ENCODE measurements at regions of chr5 and their contacts with region 1.

Region 1: GRCh38 chr5:178859625-178860531 is at the start of gene ZNF354B:
- DNase-seq: peak; percentile 95
- H3K4me3 Mint-ChIP-seq: peak within 1 kb of the TSS; percentile 89
- H3K27ac Mint-ChIP-seq: peak within 1 kb of the TSS; percentile 83
- H3K4me1 Mint-ChIP-seq: peaks cover 16% of the 10 kb centered on the region
- H3K27me3 Mint-ChIP-seq: no peaks in the 10 kb centered on the region
- total RNA-seq, gene ZNF354B: 13.5 and 17.0 TPM in 2 replicates

Region 2: DNA sequence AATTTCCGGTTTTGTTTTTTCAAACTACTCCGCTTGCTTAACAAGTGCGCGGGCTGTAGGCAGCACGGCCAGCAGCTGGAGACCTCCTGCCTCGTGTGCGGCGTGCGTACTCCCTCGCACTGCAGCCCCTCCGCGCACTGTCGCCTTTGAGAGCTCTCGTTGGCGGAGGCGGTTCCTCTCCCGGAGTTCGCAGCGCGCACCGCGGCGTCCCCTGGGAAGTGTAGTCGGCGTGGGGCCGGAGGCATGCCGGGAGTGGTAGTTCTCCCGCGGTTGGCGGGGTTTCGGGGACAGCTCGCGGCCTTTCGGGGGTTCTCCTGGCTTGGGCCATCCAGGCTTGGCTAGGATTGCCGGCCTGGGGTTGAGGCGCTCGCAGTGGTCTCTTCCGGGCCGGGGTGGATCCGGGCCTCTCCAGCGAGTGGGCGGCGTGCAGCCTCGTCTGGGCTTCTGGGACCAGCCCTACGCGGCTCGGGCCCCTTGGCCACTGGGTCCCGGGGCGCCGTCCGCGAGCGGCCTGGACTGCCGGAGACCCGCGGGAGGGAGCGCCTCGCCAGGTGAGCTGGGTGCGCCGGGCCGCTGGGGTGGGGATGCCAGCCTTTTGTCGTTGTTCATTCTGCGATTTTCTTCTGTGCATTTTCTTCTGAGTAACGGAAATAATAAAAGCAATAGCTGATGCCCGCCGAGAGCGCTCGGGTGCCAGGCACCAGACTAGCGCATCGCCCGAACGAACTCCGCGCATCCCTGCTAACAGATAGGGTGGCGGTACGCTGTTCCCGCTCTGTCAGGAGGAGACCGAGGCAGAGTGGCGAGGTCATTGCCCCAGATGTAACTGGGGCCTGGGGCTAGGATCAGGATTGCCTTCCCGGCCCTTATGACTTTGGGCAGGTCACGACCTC is 200.5 kb after region 1 on chr5 and contains the start of gene ZNF354C:
- intact Hi-C with region 1: loop called (anchors 1 kb)
- DNase-seq: peak; percentile 94
- H3K4me3 Mint-ChIP-seq: peak within 1 kb of the TSS; percentile 91
- H3K27ac Mint-ChIP-seq: peak within 1 kb of the TSS; percentile 87
- H3K4me1 Mint-ChIP-seq: peaks cover 12% of the 10 kb centered on the region
- H3K27me3 Mint-ChIP-seq: no peaks in the 10 kb centered on the region
- total RNA-seq, gene ZNF354C: 4.0 and 4.5 TPM in 2 replicates

Measured in activated CD4-positive, alpha-beta T cell treated with anti-CD3 and anti-CD28 coated beads, Interleukin-2, amount 10 ng/mL, durations not matched to agents 24 days and 14 days (primary cell).